Stomach (tissue), 19 donors: ENCODE measurements at regions of chr9 and their contacts with region 1.

Region 1: GRCh38 chr9:124776954-124777665 is at the start of gene OLFML2A:
- DNase-seq: peak in 1 of 2 donors; percentile 78
- H3K4me3 ChIP-seq: peak within 1 kb of the TSS; percentile 58 to 68 (median 62)
- H3K27ac ChIP-seq: peak within 1 kb of the TSS; percentile 22 to 82 (median 58)
- H3K4me1 ChIP-seq: peaks cover 17 to 53% (median 36%) of the 10 kb centered on the region in 4 donors
- H3K27me3 ChIP-seq: peaks cover 0 to 27% (median 19%) of the 10 kb centered on the region in 3 donors
- CTCF ChIP-seq: peak in 2 of 7 experiments; percentile 6 to 29
- EP300 ChIP-seq: no peak
- POLR2A ChIP-seq: no peak
- total RNA-seq, gene OLFML2A: 1.7 to 91.2 (median 4.1) TPM

Region 2: DNA sequence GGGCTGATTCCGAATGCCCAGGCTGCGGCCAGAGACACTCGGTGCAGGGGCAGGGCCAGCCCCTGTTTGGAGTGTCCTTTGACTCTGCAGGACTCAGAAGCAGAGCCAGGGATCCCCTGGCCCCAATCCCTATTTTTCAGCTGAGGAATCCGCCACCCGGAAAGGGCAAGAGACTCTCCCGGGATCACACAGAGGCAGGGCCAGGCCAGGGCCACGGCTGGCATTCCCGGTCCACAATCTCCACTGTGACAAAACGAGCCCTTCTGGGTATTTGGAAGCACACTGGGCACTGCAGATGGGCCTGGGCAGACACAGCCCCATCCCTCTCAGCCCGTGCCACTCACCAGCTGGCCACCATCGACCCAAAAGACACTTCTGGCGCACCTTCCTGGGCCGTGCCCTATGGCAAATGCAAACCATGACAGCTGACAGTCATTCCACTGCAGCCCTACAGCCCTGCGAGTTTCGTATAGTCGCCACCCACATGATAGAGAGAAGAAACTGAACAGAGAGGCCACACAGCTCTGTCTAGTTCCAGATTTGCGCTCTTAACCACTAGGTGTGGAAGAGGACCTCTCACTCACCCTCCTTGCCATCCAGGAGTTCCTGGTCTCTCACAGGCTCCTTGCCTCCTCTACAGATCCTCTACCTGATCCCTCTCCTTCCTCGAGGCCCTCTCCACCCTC is 283.2 kb before region 1 on chr9:
- intact Hi-C with region 1: no loop called
- DNase-seq: no peak
- H3K4me3 ChIP-seq: no peak overlapping the region
- H3K27ac ChIP-seq: no peak overlapping the region
- H3K4me1 ChIP-seq: no peaks in the 10 kb centered on the region
- H3K27me3 ChIP-seq: peaks cover 0 to 83% (median 8%) of the 10 kb centered on the region in 3 donors
- CTCF ChIP-seq: no peak
- EP300 ChIP-seq: no peak
- POLR2A ChIP-seq: no peak

Region 3: DNA sequence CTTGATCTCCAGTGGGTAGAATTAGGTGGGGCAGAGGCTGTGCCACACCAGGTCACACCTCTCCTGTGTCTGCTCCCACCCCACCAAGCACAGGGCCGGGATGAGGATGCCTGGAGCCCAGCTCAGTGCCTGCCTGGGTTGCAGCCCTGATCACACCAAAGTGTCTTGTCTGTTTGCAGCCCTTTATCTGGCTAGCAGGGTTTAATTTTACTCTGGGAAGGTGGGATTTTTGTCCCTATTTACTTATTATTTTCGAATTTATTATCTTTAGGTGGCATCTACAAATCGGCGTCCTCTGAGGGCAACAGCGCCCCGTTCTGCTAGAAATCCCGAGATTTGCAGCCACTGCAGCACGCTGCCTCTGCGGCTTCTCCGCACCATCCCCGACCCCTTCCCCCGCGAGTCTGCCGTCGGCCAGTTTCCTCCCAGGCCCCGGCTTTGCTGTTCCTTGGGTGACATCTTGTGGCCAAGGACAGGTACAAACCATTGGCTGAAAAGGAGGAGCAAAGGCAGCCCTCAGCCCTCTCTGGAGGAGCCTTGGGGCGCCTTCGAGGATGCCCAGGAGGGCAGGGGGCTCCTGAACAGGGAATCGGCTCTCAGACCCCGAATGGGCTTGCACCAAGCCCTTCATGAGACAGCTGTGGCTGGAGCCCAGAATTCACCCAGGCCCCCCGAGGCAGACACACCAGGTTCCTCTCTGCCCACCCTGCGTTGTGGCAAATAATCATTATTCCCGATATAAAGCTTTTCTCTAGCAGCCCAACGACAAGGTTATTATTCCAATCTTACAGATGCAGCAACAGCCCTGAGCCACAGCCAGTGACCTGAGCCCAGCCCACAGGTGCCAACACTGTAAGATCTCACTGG is 597.6 kb after region 1 on chr9:
- intact Hi-C with region 1: loop called (anchors 5 kb)
- DNase-seq: peak; percentile 58 to 91
- H3K4me3 ChIP-seq: peak overlapping the region; percentile 24 to 31 (median 30)
- H3K27ac ChIP-seq: no peak overlapping the region
- H3K4me1 ChIP-seq: peaks cover 8 to 14% (median 9%) of the 10 kb centered on the region in 4 donors
- H3K27me3 ChIP-seq: peaks cover 0 to 16% (median 0%) of the 10 kb centered on the region in 3 donors
- CTCF ChIP-seq: peak in 5 of 7 experiments; percentile 59 to 87 (median 74)
- EP300 ChIP-seq: no peak
- POLR2A ChIP-seq: no peak